Caco-2 (cell line): ENCODE measurements at regions of chr11 and their contacts with region 1.

Region 1: GRCh38 chr11:7538031-7538430 is 24.2 kb downstream of the PPFIBP2 start:
- DNase-seq: no peak
- H3K4me3 ChIP-seq: no peak overlapping the region
- H3K4me3 Mint-ChIP-seq: no peak overlapping the region
- H3K27ac Mint-ChIP-seq: peak overlapping the region; percentile 58
- H3K4me1 ChIP-seq: peaks cover 44% of the 10 kb centered on the region
- H3K4me1 Mint-ChIP-seq: peaks cover 51% of the 10 kb centered on the region
- H3K27me3 ChIP-seq: no peaks in the 10 kb centered on the region
- H3K27me3 Mint-ChIP-seq: no peaks in the 10 kb centered on the region
- CTCF ChIP-seq: no peak

Region 2: GRCh38 chr11:7457211-7457610 is 80.8 kb before region 1 on chr11:
- CTCF ChIA-PET with region 1: no interaction called
- POLR2A ChIA-PET with region 1: no interaction called
- intact Hi-C with region 1: no loop called
- DNase-seq: no peak
- H3K4me3 ChIP-seq: no peak overlapping the region
- H3K4me3 Mint-ChIP-seq: no peak overlapping the region
- H3K27ac Mint-ChIP-seq: no peak overlapping the region
- H3K4me1 ChIP-seq: no peaks in the 10 kb centered on the region
- H3K4me1 Mint-ChIP-seq: no peaks in the 10 kb centered on the region
- H3K27me3 ChIP-seq: no peaks in the 10 kb centered on the region; the same call in 1 of the 2 replicates
- H3K27me3 Mint-ChIP-seq: peaks cover 11% of the 10 kb centered on the region
- CTCF ChIP-seq: no peak

Region 3: DNA sequence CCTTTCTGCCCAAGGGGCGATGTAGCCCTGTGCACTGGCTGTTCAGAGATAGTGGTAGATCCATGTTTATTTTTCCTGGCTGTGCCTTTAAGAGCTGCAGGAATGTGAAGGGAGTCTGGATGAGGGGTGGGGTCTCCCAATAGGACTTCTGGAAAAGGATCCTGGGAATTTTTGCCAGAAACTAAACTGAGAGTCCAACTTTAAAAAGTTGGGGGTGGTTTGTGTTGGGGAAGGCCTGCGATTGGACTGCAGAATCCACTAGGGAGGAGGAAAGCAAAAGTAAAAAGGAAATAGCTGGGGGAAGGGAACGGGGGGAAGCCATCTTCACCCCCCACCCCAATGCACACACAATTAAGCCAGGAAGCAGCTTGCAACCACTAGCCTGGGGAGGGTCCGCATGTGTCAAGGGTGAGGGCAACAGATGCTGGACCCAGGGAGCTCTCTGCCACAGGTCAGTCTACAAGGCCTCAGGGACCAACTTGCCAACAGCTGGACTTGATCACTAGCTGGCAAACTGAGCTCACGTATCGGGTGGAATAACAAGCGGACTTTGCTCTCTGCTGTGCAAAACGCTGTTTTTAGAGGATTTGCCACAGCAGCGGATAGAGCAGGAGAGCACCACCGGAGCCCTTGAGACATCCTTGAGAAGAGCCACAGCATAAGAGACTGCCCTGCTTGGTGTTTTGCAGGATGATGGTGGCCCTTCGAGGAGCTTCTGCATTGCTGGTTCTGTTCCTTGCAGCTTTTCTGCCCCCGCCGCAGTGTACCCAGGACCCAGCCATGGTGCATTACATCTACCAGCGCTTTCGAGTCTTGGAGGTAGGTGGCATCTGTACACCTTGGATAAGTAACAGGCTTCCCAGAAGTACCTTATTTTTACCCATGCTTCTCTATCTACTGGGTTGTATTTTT is 52.6 kb before region 1 on chr11 and contains the start of gene OLFML1:
- CTCF ChIA-PET with region 1: no interaction called
- POLR2A ChIA-PET with region 1: no interaction called
- intact Hi-C with region 1: loop called (anchors 2 kb)
- DNase-seq: no peak
- H3K4me3 ChIP-seq: no peak within 1 kb of the TSS
- H3K4me3 Mint-ChIP-seq: peak within 1 kb of the TSS; percentile 65
- H3K27ac Mint-ChIP-seq: peak within 1 kb of the TSS; percentile 39
- H3K4me1 ChIP-seq: peaks cover 21% of the 10 kb centered on the region
- H3K4me1 Mint-ChIP-seq: peaks cover 13% of the 10 kb centered on the region
- H3K27me3 ChIP-seq: no peaks in the 10 kb centered on the region
- H3K27me3 Mint-ChIP-seq: no peaks in the 10 kb centered on the region
- CTCF ChIP-seq: no peak
- total RNA-seq, gene OLFML1: 1.8 and 3.9 TPM in 2 replicates

Region 4: DNA sequence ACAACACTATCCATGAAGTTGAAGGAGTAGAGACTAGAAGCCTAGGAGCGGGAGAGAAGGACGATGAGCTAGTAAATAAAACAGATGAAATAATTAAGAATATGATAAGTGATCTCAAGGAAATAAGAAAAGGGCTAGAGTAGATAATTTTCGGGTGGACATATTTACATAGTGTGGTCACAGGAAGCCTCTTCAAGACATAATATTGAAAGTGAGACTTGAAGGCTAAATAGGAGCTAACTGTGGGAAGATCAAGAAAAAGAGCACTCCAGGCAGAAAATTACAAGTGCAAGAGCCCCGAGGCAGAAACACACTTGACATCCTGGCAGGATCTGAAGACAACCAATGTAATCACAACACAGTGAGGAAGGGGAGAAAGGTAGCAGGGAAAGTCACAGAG is 36.1 kb before region 1 on chr11:
- CTCF ChIA-PET with region 1: no interaction called
- POLR2A ChIA-PET with region 1: no interaction called
- intact Hi-C with region 1: no loop called
- DNase-seq: no peak
- H3K4me3 ChIP-seq: no peak overlapping the region
- H3K4me3 Mint-ChIP-seq: no peak overlapping the region
- H3K27ac Mint-ChIP-seq: no peak overlapping the region
- H3K4me1 ChIP-seq: no peaks in the 10 kb centered on the region
- H3K4me1 Mint-ChIP-seq: no peaks in the 10 kb centered on the region
- H3K27me3 ChIP-seq: no peaks in the 10 kb centered on the region
- H3K27me3 Mint-ChIP-seq: peaks cover 2% of the 10 kb centered on the region
- CTCF ChIP-seq: no peak